B cell (primary cell): ENCODE measurements at regions of chr22 and their contacts with region 1.

Region 1: GRCh38 chr22:28600546-28601143 is 79.0 kb downstream of the TTC28 start:
- DNase-seq: peak; percentile 68
- ATAC-seq: no peak
- H3K4me3 ChIP-seq: no peak overlapping the region
- H3K4me3 Mint-ChIP-seq: no peak overlapping the region
- H3K27ac ChIP-seq: no peak overlapping the region
- H3K27ac Mint-ChIP-seq: no peak overlapping the region
- H3K4me1 ChIP-seq: no peaks in the 10 kb centered on the region
- H3K4me1 Mint-ChIP-seq: no peaks in the 10 kb centered on the region
- H3K27me3 ChIP-seq: no peaks in the 10 kb centered on the region
- H3K27me3 Mint-ChIP-seq: peaks cover 3% of the 10 kb centered on the region
- CTCF ChIP-seq: peak; percentile 86

Region 2: GRCh38 chr22:28348613-28349609 is 251.7 kb before region 1 on chr22:
- CTCF ChIA-PET with region 1: no interaction called
- POLR2A ChIA-PET with region 1: no interaction called
- intact Hi-C with region 1: no loop called
- DNase-seq: no peak
- ATAC-seq: no peak
- H3K4me3 ChIP-seq: no peak overlapping the region
- H3K4me3 Mint-ChIP-seq: no peak overlapping the region
- H3K27ac ChIP-seq: no peak overlapping the region
- H3K27ac Mint-ChIP-seq: no peak overlapping the region
- H3K4me1 ChIP-seq: no peaks in the 10 kb centered on the region
- H3K4me1 Mint-ChIP-seq: no peaks in the 10 kb centered on the region
- H3K27me3 ChIP-seq: no peaks in the 10 kb centered on the region
- H3K27me3 Mint-ChIP-seq: peaks cover 11% of the 10 kb centered on the region
- CTCF ChIP-seq: no peak

Region 3: DNA sequence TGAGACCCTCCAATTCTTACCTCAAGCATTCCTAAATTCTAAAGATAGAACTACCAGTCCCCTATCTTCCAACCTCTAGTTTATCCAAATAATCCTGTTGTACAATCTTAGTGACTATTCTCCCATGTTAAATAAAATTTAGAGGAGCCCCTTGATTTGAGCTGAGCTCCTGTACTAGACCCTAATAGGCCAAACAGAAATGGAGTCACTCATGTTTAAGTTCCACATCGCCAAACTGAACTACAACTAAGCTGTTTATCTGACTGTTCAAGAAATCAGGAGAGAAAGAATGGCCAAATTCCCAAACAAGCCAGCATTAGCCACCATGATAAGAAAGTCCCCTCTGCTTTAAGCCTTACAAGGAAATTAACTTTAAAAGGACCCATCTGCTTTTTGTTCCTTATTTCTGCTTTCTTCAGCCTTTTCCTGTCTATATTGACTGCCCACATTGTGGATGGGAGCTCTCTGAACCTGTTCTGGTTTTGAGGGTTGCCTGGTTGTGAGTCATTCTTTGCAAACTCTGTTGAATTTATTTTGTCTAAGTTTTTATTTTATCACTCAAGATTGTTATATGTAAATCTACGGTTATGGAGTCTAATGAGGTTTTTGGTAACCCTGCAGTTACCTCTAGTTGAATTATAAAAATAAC is 11.4 kb before region 1 on chr22:
- CTCF ChIA-PET with region 1: interaction called, 17 read pairs
- POLR2A ChIA-PET with region 1: no interaction called
- intact Hi-C with region 1: no loop called
- DNase-seq: no peak
- ATAC-seq: no peak
- H3K4me3 ChIP-seq: no peak overlapping the region
- H3K4me3 Mint-ChIP-seq: no peak overlapping the region
- H3K27ac ChIP-seq: no peak overlapping the region
- H3K27ac Mint-ChIP-seq: no peak overlapping the region
- H3K4me1 ChIP-seq: no peaks in the 10 kb centered on the region
- H3K4me1 Mint-ChIP-seq: no peaks in the 10 kb centered on the region
- H3K27me3 ChIP-seq: no peaks in the 10 kb centered on the region
- H3K27me3 Mint-ChIP-seq: no peaks in the 10 kb centered on the region
- CTCF ChIP-seq: no peak

Region 4: GRCh38 chr22:28711820-28712777 is 111.5 kb after region 1 on chr22:
- CTCF ChIA-PET with region 1: no interaction called
- POLR2A ChIA-PET with region 1: no interaction called
- intact Hi-C with region 1: no loop called
- DNase-seq: no peak
- ATAC-seq: no peak
- H3K4me3 ChIP-seq: no peak overlapping the region
- H3K4me3 Mint-ChIP-seq: no peak overlapping the region
- H3K27ac ChIP-seq: no peak overlapping the region
- H3K27ac Mint-ChIP-seq: no peak overlapping the region
- H3K4me1 ChIP-seq: peaks cover 5% of the 10 kb centered on the region in 2 donors
- H3K4me1 Mint-ChIP-seq: peaks cover 5% of the 10 kb centered on the region
- H3K27me3 ChIP-seq: no peaks in the 10 kb centered on the region
- H3K27me3 Mint-ChIP-seq: no peaks in the 10 kb centered on the region
- CTCF ChIP-seq: no peak

Region 5: DNA sequence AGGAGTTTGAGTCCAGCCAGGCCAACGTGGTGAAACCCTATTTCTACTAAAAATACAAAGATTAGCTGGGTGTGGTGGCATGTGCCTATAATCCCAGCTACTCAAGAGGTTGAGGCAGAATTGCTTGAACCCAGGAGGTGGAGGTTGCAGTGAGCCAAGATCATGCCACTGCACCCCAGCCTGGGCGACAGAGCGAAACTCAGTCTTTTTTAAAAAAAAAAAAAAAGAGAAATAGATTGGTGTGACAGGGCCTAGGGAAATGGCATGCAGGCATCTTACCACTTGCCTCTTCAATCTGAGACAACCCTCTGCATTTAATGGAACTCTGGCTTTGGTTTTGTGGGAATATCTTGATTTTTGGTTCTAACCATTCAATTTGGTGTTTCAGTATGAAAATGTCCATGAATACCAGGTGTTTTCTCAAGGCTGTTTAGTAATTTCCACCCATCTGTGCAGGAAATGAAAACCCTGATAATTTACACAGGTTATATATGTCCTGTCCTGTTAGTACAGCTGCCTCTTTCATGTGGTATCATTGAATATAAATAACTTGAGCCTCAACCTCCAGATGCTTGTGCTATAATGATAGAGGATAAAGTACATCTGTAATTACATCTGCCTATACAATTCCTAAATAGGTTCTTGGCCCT is 191.3 kb after region 1 on chr22:
- CTCF ChIA-PET with region 1: interaction called, 10 read pairs
- POLR2A ChIA-PET with region 1: no interaction called
- intact Hi-C with region 1: no loop called
- DNase-seq: peak; percentile 28
- ATAC-seq: peak; percentile 67
- H3K4me3 ChIP-seq: no peak overlapping the region
- H3K4me3 Mint-ChIP-seq: peak overlapping the region; percentile 40
- H3K27ac ChIP-seq: peak overlapping the region; percentile 32 to 66
- H3K27ac Mint-ChIP-seq: peak overlapping the region; percentile 69
- H3K4me1 ChIP-seq: peaks cover 28 to 32% of the 10 kb centered on the region in 2 donors
- H3K4me1 Mint-ChIP-seq: peaks cover 63% of the 10 kb centered on the region
- H3K27me3 ChIP-seq: no peaks in the 10 kb centered on the region
- H3K27me3 Mint-ChIP-seq: no peaks in the 10 kb centered on the region
- CTCF ChIP-seq: no peak

Region 6: GRCh38 chr22:28817919-28818909 is 217.6 kb after region 1 on chr22:
- CTCF ChIA-PET with region 1: interaction called, 24 read pairs
- POLR2A ChIA-PET with region 1: no interaction called
- intact Hi-C with region 1: no loop called
- DNase-seq: no peak
- ATAC-seq: no peak
- H3K4me3 ChIP-seq: no peak overlapping the region
- H3K4me3 Mint-ChIP-seq: no peak overlapping the region
- H3K27ac ChIP-seq: no peak overlapping the region
- H3K27ac Mint-ChIP-seq: peak overlapping the region; percentile 37
- H3K4me1 ChIP-seq: peaks cover 13 to 23% of the 10 kb centered on the region in 2 donors
- H3K4me1 Mint-ChIP-seq: peaks cover 29% of the 10 kb centered on the region
- H3K27me3 ChIP-seq: no peaks in the 10 kb centered on the region
- H3K27me3 Mint-ChIP-seq: no peaks in the 10 kb centered on the region
- CTCF ChIP-seq: no peak

Region 7: DNA sequence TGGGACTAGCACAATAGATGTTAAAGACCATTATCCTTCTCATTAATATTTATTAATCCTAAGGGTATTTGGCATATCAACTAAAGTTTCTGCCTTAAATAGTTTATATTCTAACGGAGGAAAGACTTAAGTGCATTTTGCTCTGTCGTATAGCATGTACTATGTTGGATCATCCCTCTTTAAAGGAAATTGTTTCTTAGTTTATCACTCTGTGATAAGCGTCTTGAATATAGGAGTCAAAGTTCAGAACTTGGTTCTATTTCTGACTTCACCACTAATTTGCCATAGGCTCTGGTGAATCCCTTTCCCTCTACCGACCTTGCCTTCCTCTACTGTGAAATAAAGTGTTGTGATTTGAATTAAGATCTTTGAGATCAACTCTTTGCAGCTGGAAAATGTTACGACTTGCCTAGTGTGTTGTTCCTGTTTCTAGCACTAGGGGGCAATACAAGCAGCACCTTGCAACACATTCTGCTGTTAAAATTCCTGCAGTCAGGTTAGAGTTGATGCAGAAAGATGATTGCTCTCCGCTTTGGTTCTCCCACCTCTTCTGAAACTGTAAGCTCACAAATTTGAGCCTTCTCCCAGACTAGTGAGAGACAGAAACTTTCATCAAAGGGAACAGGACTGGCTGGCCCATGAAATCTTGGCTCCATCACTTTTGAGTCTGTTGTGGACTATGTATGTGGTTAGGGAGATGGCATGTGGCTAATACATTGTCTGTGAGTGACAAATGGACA is 254.9 kb after region 1 on chr22:
- CTCF ChIA-PET with region 1: interaction called, 10 read pairs
- POLR2A ChIA-PET with region 1: no interaction called
- intact Hi-C with region 1: no loop called
- DNase-seq: peak; percentile 72
- ATAC-seq: peak; percentile 61
- H3K4me3 ChIP-seq: no peak overlapping the region
- H3K4me3 Mint-ChIP-seq: no peak overlapping the region
- H3K27ac ChIP-seq: no peak overlapping the region
- H3K27ac Mint-ChIP-seq: no peak overlapping the region
- H3K4me1 ChIP-seq: no peaks in the 10 kb centered on the region
- H3K4me1 Mint-ChIP-seq: no peaks in the 10 kb centered on the region
- H3K27me3 ChIP-seq: peaks cover 0 to 5% (median 2%) of the 10 kb centered on the region in 4 experiments
- H3K27me3 Mint-ChIP-seq: peaks cover 12% of the 10 kb centered on the region
- CTCF ChIP-seq: peak; percentile 96

Region 8: GRCh38 chr22:29040385-29041275 is 440.0 kb after region 1 on chr22:
- CTCF ChIA-PET with region 1: interaction called, 77 read pairs
- POLR2A ChIA-PET with region 1: no interaction called
- intact Hi-C with region 1: loop called (anchors 1 kb)
- DNase-seq: peak; percentile 77
- ATAC-seq: peak; percentile 54
- H3K4me3 ChIP-seq: no peak overlapping the region
- H3K4me3 Mint-ChIP-seq: no peak overlapping the region
- H3K27ac ChIP-seq: no peak overlapping the region
- H3K27ac Mint-ChIP-seq: no peak overlapping the region
- H3K4me1 ChIP-seq: peaks cover 0 to 2% of the 10 kb centered on the region in 2 donors
- H3K4me1 Mint-ChIP-seq: no peaks in the 10 kb centered on the region
- H3K27me3 ChIP-seq: peaks cover 0 to 8% (median 3%) of the 10 kb centered on the region in 4 experiments
- H3K27me3 Mint-ChIP-seq: peaks cover 6% of the 10 kb centered on the region
- CTCF ChIP-seq: peak; percentile 96

Region 9: DNA sequence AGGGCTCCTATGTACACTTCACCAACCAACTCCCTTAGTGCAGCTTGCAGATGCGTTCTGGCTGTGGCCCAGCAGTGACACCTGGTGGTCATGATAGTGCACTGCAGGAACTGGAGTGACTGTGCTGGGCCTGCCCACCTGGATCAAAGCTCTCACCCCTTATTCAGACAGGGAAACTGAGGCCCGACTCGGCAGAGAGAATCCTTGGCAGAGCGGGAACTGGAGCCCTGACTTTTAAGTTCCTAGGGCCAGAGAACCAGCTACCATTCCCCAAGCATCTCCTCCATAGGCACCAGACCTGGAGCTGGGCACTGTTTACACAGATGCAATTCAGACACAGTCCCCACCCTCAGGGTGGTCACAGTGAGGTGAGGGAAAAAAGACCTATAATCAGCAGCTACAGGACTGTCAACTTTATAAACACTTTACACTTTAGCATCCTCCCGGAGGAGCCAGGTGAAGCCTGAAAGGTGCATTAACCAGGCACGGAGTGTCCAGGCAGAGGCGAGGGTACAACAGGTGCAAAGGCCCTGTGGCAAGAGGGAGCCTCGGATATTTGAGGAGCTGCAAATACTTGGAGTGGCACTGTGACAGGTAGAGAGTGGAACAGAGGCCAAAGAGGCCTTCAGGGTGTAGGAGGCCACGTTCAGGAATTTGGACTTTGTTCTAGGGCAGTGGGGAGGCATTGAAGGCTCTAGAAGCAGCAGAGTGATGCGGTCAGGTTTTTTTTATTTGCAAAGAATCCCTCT is 645.2 kb after region 1 on chr22:
- CTCF ChIA-PET with region 1: interaction called, 21 read pairs
- POLR2A ChIA-PET with region 1: no interaction called
- intact Hi-C with region 1: no loop called
- DNase-seq: peak; percentile 76
- ATAC-seq: peak; percentile 89
- H3K4me3 ChIP-seq: no peak overlapping the region
- H3K4me3 Mint-ChIP-seq: no peak overlapping the region
- H3K27ac ChIP-seq: no peak overlapping the region
- H3K27ac Mint-ChIP-seq: no peak overlapping the region
- H3K4me1 ChIP-seq: peaks cover 3 to 4% of the 10 kb centered on the region in 2 donors
- H3K4me1 Mint-ChIP-seq: no peaks in the 10 kb centered on the region
- H3K27me3 ChIP-seq: peaks cover 0 to 17% (median 3%) of the 10 kb centered on the region in 4 experiments
- H3K27me3 Mint-ChIP-seq: peaks cover 20% of the 10 kb centered on the region
- CTCF ChIP-seq: peak; percentile 99